B cell (primary cell): ENCODE measurements at regions of chr4 and their contacts with region 1.

Region 1: DNA sequence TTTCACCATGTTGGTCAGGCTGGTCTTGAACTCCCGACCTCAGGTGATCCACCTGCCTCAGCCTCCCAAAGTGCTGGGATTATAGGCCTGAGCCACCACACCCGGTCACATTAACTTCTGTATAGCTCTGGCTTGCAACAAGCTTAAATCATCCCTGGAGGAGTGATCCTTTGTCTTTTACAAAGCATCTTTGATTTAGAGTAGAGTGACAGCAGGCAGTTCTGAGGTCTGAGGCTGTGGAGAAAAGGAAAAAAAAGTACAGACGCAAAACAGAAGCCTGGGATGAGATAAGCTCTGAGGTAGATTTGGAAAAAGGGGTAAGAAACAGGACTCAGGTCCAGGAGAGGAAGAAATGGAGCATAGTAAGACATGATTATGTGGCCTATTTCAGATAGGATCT is 143.1 kb downstream of the CHRNA9 start:
- DNase-seq: no peak
- ATAC-seq: no peak
- H3K4me3 ChIP-seq: no peak overlapping the region
- H3K4me3 Mint-ChIP-seq: no peak overlapping the region
- H3K27ac ChIP-seq: no peak overlapping the region
- H3K27ac Mint-ChIP-seq: no peak overlapping the region
- H3K4me1 ChIP-seq: no peaks in the 10 kb centered on the region
- H3K4me1 Mint-ChIP-seq: no peaks in the 10 kb centered on the region
- H3K27me3 ChIP-seq: no peaks in the 10 kb centered on the region
- H3K27me3 Mint-ChIP-seq: peaks cover 3% of the 10 kb centered on the region
- CTCF ChIP-seq: no peak

Region 2: GRCh38 chr4:40283968-40284367 is 194.2 kb before region 1 on chr4:
- CTCF ChIA-PET with region 1: no interaction called
- POLR2A ChIA-PET with region 1: interaction called, 10 read pairs
- intact Hi-C with region 1: no loop called
- DNase-seq: peak; percentile 60
- ATAC-seq: peak; percentile 71
- H3K4me3 ChIP-seq: no peak overlapping the region
- H3K4me3 Mint-ChIP-seq: no peak overlapping the region
- H3K27ac ChIP-seq: no peak overlapping the region
- H3K27ac Mint-ChIP-seq: peak overlapping the region; percentile 63
- H3K4me1 ChIP-seq: peaks cover 24 to 49% of the 10 kb centered on the region in 2 donors
- H3K4me1 Mint-ChIP-seq: peaks cover 56% of the 10 kb centered on the region
- H3K27me3 ChIP-seq: no peaks in the 10 kb centered on the region
- H3K27me3 Mint-ChIP-seq: no peaks in the 10 kb centered on the region
- CTCF ChIP-seq: no peak